Posterior cingulate gyrus (tissue), 11 donors: ENCODE measurements at regions of chr5 and their contacts with region 1.

Region 1: GRCh38 chr5:114097570-114097969 is 264.3 kb upstream of the KCNN2 start:
- DNase-seq: no peak

Region 2: DNA sequence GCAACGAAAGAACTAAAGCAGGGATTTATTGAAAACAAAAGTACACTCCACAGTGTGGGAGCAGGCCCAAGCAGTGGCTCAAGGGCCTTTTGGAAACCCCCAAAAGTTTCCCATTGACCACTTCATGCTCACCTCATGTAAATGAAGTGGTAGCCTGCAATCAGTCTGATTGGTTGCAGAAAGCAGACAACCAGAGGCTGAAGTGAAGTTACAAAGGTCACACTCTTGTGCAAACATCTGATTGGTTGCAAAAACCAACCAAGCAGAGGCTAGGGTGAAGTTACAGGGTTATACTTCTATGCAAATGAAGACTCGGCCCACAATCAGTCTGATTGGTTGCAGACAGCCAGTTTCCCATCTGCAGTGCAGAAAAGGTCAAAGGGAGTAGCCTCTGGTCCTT is 326.1 kb before region 1 on chr5:
- intact Hi-C with region 1: loop called (anchors 5 kb)
- DNase-seq: no peak